PC-9 (cell line): ENCODE measurements at regions of chr16 and their contacts with region 1.

Region 1: GRCh38 chr16:50388496-50388895 is 19.7 kb upstream of the BRD7 start:
- DNase-seq: no peak
- H3K4me3 ChIP-seq: no peak overlapping the region
- H3K27ac ChIP-seq: no peak overlapping the region
- H3K4me1 ChIP-seq: no peaks in the 10 kb centered on the region
- H3K27me3 ChIP-seq: no peaks in the 10 kb centered on the region
- CTCF ChIP-seq: no peak

Region 2: DNA sequence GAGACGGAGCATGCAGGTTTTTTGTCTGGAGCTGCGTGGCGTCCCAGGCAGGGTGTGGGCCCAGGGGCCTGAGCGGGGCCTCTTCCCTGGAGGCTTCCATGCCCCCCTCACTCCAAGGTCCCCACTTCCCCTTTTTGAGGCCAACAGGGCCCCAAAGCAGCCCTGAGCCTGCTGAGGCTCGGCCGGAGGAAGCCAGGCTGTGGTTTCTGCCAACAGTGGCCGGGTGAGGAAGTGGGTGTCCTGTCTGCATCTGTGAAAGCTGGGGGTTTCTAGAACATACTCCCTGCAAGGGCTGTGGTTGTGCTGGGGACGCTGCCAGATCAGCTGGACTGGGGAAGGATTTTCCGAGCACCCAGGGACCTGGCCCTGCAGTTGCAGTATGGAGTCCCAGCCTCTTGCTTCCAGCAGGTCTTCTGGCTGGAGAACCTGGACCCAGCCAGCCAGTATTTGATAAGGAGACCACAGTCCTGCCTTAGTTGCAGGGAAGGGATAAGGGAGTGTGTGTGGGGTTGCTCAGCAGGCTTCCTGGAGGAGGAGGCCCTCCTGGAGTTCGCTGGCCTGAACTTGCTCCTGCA is 106.4 kb before region 1 on chr16:
- CTCF ChIA-PET with region 1: no interaction called
- POLR2A ChIA-PET with region 1: no interaction called
- intact Hi-C with region 1: no loop called
- DNase-seq: no peak
- H3K4me3 ChIP-seq: no peak overlapping the region
- H3K27ac ChIP-seq: no peak overlapping the region
- H3K4me1 ChIP-seq: no peaks in the 10 kb centered on the region
- H3K27me3 ChIP-seq: no peaks in the 10 kb centered on the region
- CTCF ChIP-seq: no peak

Region 3: DNA sequence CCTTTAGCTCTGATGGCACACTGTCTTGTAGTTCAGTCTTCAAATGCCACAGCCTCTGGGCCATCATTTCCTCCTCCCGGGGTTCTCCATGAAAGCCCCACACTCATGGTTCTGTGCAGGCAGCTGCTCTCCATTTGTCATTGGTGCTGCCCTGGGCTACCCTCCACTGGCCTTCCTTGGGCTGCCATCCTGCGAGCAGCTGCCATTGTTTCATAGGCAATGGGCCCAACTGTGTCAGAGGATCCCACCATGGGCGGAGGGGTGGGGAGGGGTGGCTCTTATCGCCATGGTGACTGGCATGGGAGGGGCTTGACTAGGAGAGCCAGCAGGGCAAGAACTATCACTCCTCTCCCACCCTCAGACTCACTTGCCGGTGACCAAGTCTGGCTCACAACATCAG is 18.9 kb after region 1 on chr16:
- CTCF ChIA-PET with region 1: interaction called, 10 read pairs
- POLR2A ChIA-PET with region 1: no interaction called
- intact Hi-C with region 1: no loop called
- DNase-seq: no peak
- H3K4me3 ChIP-seq: no peak overlapping the region
- H3K27ac ChIP-seq: no peak overlapping the region
- H3K4me1 ChIP-seq: no peaks in the 10 kb centered on the region
- H3K27me3 ChIP-seq: no peaks in the 10 kb centered on the region
- CTCF ChIP-seq: no peak

Region 4: DNA sequence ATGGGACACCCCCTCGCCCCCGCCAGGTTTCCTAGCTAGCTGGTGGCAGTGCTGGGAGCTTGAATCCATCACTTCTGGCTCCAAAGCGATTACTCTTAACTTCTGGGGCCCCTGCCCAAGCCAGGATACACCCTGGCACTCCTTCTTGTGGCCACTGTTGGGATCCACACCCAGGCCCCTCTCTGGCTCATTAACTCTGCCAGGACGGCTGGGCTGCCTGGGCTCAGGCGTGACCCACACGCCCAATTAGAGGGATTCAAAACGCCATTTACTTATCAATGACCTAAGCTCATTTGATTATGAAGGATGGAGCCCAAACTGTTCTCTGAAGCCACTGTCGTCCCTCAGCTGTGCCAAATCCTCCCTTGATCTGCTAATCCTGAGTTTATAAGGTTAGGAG is 60.0 kb after region 1 on chr16:
- CTCF ChIA-PET with region 1: no interaction called
- POLR2A ChIA-PET with region 1: no interaction called
- intact Hi-C with region 1: no loop called
- DNase-seq: no peak
- H3K4me3 ChIP-seq: no peak overlapping the region
- H3K27ac ChIP-seq: no peak overlapping the region
- H3K4me1 ChIP-seq: no peaks in the 10 kb centered on the region
- H3K27me3 ChIP-seq: no peaks in the 10 kb centered on the region
- CTCF ChIP-seq: peak; percentile 48